GM10248 (cell line): ENCODE measurements at regions of chr12 and their contacts with region 1.

Region 1: DNA sequence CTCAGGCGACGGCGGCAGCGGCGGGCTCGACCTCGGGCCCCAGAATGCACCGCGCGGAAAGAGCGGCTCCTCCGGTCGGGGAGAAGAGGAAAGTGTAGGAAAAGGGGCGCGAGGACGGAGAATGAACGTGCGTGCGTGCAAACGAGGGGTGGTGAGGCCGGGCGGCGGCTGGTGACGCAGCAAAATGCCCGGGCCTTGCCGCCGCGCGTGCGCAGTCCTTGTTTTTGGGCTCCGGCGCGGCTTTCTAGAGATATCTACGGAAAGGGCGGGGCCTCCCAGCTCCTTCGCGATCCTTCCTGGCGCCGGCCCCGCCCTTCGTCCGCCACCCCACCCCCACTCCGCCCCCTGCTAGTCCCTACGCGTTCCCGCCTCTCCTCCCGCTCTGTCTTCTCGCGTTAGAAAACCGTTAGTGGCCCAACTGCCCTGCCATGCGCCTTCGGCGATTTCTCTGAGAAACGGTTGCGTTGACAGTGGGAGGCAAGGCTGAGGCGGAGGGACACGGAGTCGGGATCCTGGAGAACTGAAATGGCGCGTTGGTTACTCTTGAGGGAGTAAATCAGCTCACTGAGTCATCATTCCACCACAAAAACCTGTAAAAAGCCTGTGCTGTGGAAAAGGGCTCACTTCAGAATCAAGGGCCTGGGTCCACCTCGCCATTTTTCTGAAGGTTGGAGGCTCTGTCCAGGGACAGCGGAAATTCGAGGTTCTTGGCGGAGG is at the start of gene PTGES3:
- DNase-seq: peak; percentile 98
- CTCF ChIP-seq: no peak

Region 2: DNA sequence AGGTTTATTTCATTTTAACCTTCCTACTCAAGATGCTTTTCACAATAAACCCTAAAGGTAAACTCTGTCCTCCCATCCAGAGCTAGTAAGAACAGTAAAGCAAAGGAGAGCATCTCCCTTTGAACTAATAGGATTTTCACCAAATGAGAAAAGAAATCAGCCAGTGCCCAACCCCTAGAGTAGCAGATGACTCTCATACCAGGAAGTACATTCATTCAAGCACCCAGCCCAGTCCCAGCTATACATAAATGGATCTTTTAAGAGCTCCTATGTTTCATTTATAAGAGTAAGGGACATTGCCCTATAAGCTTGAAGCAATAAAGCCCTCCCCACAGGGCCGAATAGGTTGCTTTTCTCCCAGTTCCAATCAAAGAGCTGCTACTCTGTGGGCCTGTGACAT is 65.8 kb before region 1 on chr12:
- CTCF ChIA-PET with region 1: no interaction called
- POLR2A ChIA-PET with region 1: no interaction called
- DNase-seq: no peak
- CTCF ChIP-seq: no peak

Region 3: GRCh38 chr12:56670836-56671235 is 17.5 kb before region 1 on chr12:
- CTCF ChIA-PET with region 1: interaction called, 10 read pairs
- POLR2A ChIA-PET with region 1: interaction called, 6 read pairs
- DNase-seq: no peak
- CTCF ChIP-seq: no peak

Region 4: DNA sequence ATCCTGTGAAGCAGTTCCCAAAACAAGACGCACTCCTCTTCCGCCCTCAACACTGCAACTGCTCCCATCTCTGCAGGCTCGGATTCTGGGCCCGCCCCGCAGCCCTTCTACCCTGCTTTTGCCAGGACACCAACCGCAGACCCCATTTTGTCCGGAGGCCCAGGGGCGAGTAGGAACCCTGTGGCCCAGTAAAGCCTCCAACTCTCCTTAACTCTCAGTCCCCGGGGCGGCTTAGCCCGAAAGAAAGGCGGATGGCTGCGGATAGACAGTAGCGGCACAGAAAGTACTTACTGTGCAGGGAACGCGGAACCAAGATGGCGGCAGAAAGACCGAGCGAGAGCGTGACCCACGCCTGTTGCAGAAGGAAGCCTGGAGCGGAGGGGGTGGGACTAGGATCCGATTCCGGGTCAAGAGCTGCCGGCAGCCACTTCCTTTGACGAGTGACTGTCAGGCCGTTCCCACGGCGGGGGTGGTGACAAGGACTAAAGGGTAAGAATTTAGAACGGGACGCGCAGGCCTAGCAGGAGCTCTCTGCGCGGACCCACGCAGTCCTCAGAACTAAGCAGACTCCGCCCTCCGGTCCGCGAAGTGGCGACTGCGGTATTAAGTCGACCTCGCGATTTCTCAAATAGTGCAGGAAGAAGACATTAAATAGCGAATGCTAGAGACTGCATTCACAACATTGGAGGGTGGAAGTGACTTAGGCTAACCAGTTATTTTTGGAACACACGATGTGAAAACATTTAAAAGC is 36.9 kb after region 1 on chr12 and contains the start of gene NACA:
- CTCF ChIA-PET with region 1: no interaction called
- POLR2A ChIA-PET with region 1: interaction called, 29 read pairs
- DNase-seq: peak; percentile 98
- CTCF ChIP-seq: no peak

Region 5: GRCh38 chr12:56785874-56786273 is 97.6 kb after region 1 on chr12:
- CTCF ChIA-PET with region 1: no interaction called
- POLR2A ChIA-PET with region 1: interaction called, 14 read pairs
- DNase-seq: no peak
- CTCF ChIP-seq: no peak

Region 6: DNA sequence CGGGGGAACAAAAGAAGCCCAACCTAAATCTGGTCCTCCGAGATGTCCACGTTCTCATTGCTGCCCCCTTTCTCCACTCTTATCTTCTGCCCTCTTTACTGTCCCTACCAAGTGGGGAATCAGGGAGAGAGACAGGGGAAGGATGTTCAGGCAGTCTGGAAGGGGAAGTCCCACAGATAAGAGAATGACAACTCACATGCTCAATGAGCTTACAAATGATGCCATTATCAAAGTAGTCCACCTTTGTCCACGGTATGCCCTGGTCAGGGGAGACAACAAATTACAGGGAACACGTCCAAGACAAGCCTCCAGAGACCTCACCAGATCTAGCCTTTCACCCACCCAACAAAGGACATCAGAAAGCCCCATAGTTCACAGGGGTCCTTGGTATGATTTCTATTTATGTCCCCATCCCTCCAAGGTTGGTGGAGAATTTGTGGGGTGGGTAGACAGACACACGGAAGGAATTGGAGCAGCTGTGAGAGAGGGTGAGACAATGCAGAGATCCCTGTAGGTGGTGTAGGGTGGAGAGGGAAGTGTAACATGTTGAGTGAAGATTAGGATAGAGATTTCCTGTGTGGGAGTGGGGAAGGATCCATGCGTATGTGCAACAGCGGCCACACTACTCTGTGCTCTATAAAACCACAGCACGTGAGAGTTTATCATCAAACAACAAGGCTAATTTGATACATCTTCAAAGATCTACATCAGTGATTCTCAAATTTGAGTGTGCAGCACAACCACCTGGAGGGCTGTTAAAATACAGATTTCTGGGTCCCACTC is 350.9 kb after region 1 on chr12:
- CTCF ChIA-PET with region 1: no interaction called
- POLR2A ChIA-PET with region 1: no interaction called
- DNase-seq: no peak
- CTCF ChIP-seq: no peak

Region 7: DNA sequence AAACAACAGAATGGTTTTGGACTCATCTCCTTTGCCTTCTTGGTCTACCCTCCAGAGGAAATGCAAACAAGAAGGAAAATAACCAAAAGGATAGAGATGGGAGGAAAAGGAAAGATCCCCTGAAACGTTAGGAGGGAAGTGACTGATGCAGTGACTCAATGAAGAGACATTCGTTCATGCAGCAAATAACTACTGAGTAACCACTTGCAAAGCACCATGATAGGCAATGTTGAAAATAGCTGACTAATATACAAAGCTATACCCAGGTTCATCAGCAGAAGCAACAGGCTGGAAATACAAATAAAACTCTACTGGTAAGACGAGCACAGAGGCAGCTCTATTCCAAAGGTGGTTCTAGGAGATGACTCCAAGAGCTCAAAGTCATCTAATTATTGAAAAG is 700.7 kb after region 1 on chr12:
- CTCF ChIA-PET with region 1: no interaction called
- POLR2A ChIA-PET with region 1: no interaction called
- DNase-seq: no peak
- CTCF ChIP-seq: no peak